Activated B cell treated with CpG ODN at 0.5 μM for 24 hours (primary cell): ENCODE measurements at regions of chr1 and their contacts with region 1.

Region 1: DNA sequence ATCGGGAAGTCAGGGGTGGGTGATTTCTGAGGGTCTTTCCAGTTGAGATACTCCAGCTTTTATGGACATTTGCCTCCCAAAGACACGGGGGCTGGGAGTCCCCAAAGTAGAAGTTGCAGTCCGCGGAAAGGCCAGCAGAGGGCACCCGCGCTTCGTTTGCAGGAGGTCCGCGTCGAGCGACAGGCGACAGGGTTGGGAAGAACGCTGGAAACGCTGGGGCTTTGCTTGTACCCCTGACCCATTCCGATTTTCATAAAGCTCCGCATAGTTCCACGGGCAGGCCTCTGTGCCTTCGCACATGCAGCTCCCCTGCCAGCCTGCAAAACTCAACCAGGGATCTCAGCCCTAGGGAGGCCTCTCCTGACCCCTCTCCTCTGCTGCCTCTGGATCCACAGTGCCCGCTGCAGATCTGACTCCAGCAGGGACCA is 44.2 kb upstream of the LAPTM5 start:
- DNase-seq: peak; percentile 83
- ATAC-seq: peak; percentile 74
- H3K4me3 Mint-ChIP-seq: no peak overlapping the region
- H3K27ac Mint-ChIP-seq: no peak overlapping the region
- H3K4me1 Mint-ChIP-seq: peaks cover 19% of the 10 kb centered on the region
- H3K27me3 Mint-ChIP-seq: peaks cover 14% of the 10 kb centered on the region
- CTCF ChIP-seq: peak; percentile 64

Region 2: DNA sequence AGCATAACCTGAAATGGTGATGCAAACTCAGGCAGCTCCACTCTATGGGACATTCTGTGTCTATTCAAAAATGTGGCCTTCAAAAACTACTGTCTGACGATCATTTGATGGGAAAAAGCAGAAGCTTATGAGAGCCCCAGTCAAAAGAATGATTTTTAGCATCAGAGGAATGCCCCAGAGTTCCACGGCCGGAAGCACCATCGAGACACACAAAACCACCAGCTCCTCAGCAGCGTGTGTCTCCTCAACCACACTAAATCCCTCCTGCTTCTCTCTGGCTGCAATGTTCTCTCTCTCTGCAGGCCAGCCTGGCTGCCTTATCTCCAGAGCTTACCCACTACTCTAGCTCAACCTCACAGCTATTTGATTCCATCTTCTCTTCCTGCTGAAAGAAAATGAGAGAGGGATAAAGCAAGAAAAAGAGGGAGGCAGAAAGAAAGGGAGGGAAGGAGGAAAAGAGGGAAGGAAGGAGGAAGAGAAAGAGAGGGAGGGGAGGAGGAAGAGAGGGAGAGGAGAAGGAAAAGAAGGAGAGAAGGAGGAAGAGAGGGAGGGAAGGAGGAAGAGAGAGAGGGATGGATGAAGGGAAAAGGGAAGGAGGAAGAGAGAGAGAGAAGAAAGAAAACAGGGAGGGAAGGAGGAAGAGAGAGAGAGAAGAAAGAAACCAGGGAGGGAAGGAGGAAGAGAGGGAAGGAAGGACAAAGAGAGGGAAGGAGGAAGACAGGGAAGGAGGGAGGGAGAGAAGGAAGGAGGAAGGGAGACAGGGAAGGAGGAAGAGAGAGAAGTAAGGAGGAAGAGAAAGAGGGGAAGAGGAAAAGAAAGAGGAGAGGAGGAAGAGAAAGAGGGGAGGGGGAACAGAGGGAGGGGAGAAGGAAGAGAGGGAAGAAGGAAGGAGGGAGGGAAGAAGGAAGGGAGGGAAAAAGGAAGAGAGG is 10.7 kb before region 1 on chr1:
- CTCF ChIA-PET with region 1: interaction called, 12 read pairs
- POLR2A ChIA-PET with region 1: interaction called, 8 read pairs
- intact Hi-C with region 1: loop called (anchors 1 kb)
- DNase-seq: no peak
- ATAC-seq: peak; percentile 82
- H3K4me3 Mint-ChIP-seq: peak overlapping the region; percentile 58
- H3K27ac Mint-ChIP-seq: peak overlapping the region; percentile 72
- H3K4me1 Mint-ChIP-seq: peaks cover 31% of the 10 kb centered on the region
- H3K27me3 Mint-ChIP-seq: peaks cover 12% of the 10 kb centered on the region
- CTCF ChIP-seq: no peak

Region 3: GRCh38 chr1:30856260-30856790 is 54.5 kb after region 1 on chr1:
- CTCF ChIA-PET with region 1: interaction called, 13 read pairs
- POLR2A ChIA-PET with region 1: no interaction called
- intact Hi-C with region 1: no loop called
- DNase-seq: no peak
- ATAC-seq: peak; percentile 34
- H3K4me3 Mint-ChIP-seq: no peak overlapping the region
- H3K27ac Mint-ChIP-seq: no peak overlapping the region
- H3K4me1 Mint-ChIP-seq: peaks cover 2% of the 10 kb centered on the region
- H3K27me3 Mint-ChIP-seq: peaks cover 39% of the 10 kb centered on the region
- CTCF ChIP-seq: no peak

Region 4: GRCh38 chr1:30911046-30911954 is 109.5 kb after region 1 on chr1:
- CTCF ChIA-PET with region 1: interaction called, 158 read pairs
- POLR2A ChIA-PET with region 1: interaction called, 6 read pairs
- intact Hi-C with region 1: loop called (anchors 1 kb)
- DNase-seq: peak; percentile 47
- ATAC-seq: peak; percentile 48
- H3K4me3 Mint-ChIP-seq: no peak overlapping the region
- H3K27ac Mint-ChIP-seq: no peak overlapping the region
- H3K4me1 Mint-ChIP-seq: peaks cover 25% of the 10 kb centered on the region
- H3K27me3 Mint-ChIP-seq: peaks cover 30% of the 10 kb centered on the region
- CTCF ChIP-seq: no peak